Pancreas (tissue), 10 donors: ENCODE measurements at regions of chr18 and their contacts with region 1.

Region 1: GRCh38 chr18:71554686-71555085 is 989.5 kb downstream of the CBLN2 start:
- DNase-seq: no peak
- ATAC-seq: no peak
- H3K4me3 ChIP-seq: no peak overlapping the region
- H3K27ac ChIP-seq: no peak overlapping the region
- H3K4me1 ChIP-seq: no peaks in the 10 kb centered on the region
- H3K27me3 ChIP-seq: no peaks in the 10 kb centered on the region
- CTCF ChIP-seq: no peak

Region 2: GRCh38 chr18:71485611-71486010 is 69.1 kb before region 1 on chr18:
- intact Hi-C with region 1: loop called in 1 of 3 experiments (anchors 5 kb)
- DNase-seq: no peak
- ATAC-seq: no peak
- H3K4me3 ChIP-seq: no peak overlapping the region
- H3K27ac ChIP-seq: no peak overlapping the region
- H3K4me1 ChIP-seq: no peaks in the 10 kb centered on the region
- H3K27me3 ChIP-seq: no peaks in the 10 kb centered on the region
- CTCF ChIP-seq: no peak

Region 3: GRCh38 chr18:71754246-71754645 is 199.6 kb after region 1 on chr18:
- intact Hi-C with region 1: no loop called
- DNase-seq: no peak
- ATAC-seq: no peak
- H3K4me3 ChIP-seq: no peak overlapping the region
- H3K27ac ChIP-seq: no peak overlapping the region
- H3K4me1 ChIP-seq: no peaks in the 10 kb centered on the region
- H3K27me3 ChIP-seq: no peaks in the 10 kb centered on the region
- CTCF ChIP-seq: no peak

Region 4: DNA sequence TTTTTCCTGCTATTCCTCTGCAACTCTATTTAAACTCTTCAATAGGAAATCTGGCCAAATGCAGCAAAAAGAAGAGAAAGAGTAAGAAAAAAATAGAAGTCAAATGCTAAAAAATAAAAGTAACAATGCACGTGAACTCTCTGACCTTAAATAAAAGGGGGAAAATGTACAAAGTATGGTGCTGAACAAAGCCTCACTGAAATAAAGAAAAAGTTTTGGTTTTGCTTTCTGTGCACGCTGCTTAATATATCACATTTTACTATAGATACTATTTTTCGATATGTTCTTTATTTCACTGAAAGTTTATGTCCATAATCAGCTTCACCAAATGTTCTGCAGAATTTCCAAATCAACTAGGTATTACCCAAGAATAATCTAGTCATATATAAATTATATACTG is 593.1 kb after region 1 on chr18:
- intact Hi-C with region 1: no loop called
- DNase-seq: no peak
- ATAC-seq: no peak
- H3K4me3 ChIP-seq: no peak overlapping the region
- H3K27ac ChIP-seq: no peak overlapping the region
- H3K4me1 ChIP-seq: no peaks in the 10 kb centered on the region
- H3K27me3 ChIP-seq: no peaks in the 10 kb centered on the region
- CTCF ChIP-seq: no peak